Sigmoid colon (tissue), 7 donors: ENCODE measurements at regions of chrX and their contacts with region 1.

Region 1: DNA sequence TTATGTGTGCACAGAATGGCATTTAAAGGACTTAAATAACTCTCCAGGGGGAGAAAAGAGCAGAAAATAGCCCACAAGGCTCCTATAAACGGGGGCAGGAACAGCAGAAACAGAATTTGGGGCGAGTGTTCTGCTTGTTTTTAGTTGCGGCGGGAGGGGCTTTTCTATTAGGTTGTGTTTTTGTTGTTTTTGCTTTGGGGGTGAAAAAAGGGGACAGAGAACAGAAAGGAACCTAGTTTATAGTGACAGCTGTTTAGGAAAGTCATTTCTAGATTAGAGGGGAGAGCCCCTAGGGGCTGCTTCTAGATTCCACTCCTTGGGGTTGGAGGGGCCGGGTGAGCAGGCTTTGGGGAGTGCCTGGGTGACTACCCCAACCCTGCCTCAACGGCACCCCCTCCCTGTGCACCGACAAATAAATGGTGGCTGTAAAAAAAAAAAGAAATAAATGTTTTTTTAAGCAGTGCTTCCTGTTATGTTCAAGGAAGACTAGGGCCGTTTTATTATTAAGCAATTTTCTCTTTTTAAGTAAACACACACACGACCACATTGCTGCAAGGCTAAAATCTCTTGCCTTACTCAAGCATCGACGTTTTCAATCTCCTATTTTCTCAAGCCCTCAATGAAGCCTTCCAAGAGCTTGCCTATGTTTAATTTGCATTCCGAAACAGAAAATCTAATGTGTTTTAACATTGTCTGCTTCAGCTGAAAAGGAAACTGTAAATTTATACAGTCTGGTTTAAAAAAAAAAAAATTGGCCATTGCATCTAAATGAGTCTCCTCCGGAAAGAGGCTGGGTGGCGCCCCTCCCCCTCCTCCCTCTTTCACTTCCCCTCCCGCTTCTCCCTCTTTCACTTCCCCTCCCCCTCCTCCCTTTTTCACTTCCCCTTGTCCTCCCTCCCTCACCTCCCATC is 123.3 kb upstream of the TBL1X start:
- DNase-seq: peak; percentile 84
- H3K4me3 ChIP-seq: peak overlapping the region in 2 of 4 donors; percentile 13 to 25
- H3K27ac ChIP-seq: peak overlapping the region; percentile 73 to 83 (median 78)
- H3K4me1 ChIP-seq: peaks cover 0 to 29% (median 23%) of the 10 kb centered on the region in 4 donors
- H3K27me3 ChIP-seq: no peaks in the 10 kb centered on the region
- CTCF ChIP-seq: no peak
- EP300 ChIP-seq: no peak
- POLR2A ChIP-seq: no peak

Region 2: GRCh38 chrX:9227276-9227675 is 114.3 kb before region 1 on chrX:
- intact Hi-C with region 1: loop called (anchors 10 kb)
- DNase-seq: no peak
- H3K4me3 ChIP-seq: no peak overlapping the region
- H3K27ac ChIP-seq: no peak overlapping the region
- H3K4me1 ChIP-seq: peaks cover 0 to 6% (median 0%) of the 10 kb centered on the region in 4 donors
- H3K27me3 ChIP-seq: no peaks in the 10 kb centered on the region
- CTCF ChIP-seq: no peak
- EP300 ChIP-seq: no peak
- POLR2A ChIP-seq: no peak

Region 3: DNA sequence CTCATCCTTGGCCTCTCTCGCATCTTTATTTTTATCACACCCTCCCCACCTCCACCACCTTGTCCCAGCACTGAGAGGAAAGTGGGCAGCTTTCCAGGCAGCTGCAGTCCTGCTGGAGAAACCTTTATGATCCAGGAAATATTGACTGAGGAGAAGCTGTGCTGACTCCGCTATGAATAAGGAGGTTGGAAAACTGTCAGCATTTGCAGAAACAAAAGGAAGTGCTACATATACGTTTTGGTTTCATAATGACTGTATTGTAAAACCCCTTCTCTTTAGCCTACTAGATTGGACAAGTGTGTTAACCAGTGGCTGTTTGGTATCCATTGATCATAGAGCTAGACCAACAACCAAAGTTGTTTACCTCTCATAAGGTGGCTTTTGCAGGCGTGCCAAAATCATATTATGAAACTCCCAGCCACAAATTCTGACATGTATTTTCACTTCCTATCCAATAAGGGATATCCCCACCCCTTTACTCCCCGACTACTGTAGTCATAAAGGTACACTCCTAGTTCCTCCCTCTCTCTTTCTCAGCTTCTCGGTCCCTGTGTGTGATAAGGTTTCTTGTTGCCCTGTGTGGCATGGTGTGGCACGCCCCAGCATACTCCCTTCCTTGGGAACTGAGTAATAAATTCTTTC is 335.7 kb after region 1 on chrX:
- intact Hi-C with region 1: loop called (anchors 10 kb)
- DNase-seq: peak; percentile 78
- H3K4me3 ChIP-seq: no peak overlapping the region
- H3K27ac ChIP-seq: peak overlapping the region in 3 of 4 donors; percentile 8 to 52 (median 47)
- H3K4me1 ChIP-seq: peaks cover 0 to 7% (median 0%) of the 10 kb centered on the region in 4 donors
- H3K27me3 ChIP-seq: no peaks in the 10 kb centered on the region
- CTCF ChIP-seq: no peak
- EP300 ChIP-seq: no peak
- POLR2A ChIP-seq: no peak

Region 4: GRCh38 chrX:9708904-9709553 is 367.5 kb after region 1 on chrX:
- intact Hi-C with region 1: loop called (anchors 10 kb)
- DNase-seq: peak; percentile 82
- H3K4me3 ChIP-seq: no peak overlapping the region
- H3K27ac ChIP-seq: no peak overlapping the region
- H3K4me1 ChIP-seq: no peaks in the 10 kb centered on the region
- H3K27me3 ChIP-seq: no peaks in the 10 kb centered on the region
- CTCF ChIP-seq: peak; percentile 35 to 70 (median 56)
- EP300 ChIP-seq: no peak
- POLR2A ChIP-seq: no peak